ENCODE measurements at regions of chr7 and their contacts with region 1.

Region 1: GRCh38 chr7:25862260-25863037 is 289.5 kb upstream of the NFE2L3 start:
- DNase-seq: peak in 28 of 42 donors; percentile 25 to 72 (median 47)

Region 2: DNA sequence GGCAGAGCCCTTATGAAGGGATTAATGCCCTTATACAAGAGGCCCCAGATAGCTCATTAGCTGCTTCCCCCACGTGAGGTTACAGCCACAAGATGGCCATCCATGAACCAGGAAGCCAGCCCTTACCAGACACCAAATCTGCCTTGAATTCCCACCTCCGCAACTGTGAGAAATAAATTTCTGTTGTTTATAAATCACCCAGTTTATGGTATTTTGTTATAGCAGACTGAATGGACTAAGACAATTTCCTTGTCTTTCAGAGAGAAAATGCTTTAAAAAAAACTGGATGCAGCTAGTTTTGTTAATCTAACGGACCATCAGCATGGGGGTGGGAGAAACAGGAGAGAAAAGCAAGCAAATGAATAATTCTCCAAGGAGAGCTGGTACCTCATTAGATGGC is 375.6 kb after region 1 on chr7:
- intact Hi-C with region 1: no loop called
- DNase-seq: peak in 1 of 42 donors; percentile 17

Region 3: GRCh38 chr7:26864309-26865093 is 1002.1 kb after region 1 on chr7 and contains the start of gene SKAP2:
- intact Hi-C with region 1: loop called (anchors 10 kb)
- DNase-seq: peak; percentile 79 to 97 (median 90)

Measured in head of caudate nucleus (tissue), 42 donors.